Mammary epithelial cell (primary cell): ENCODE measurements at regions of chr19 and their contacts with region 1.

Region 1: DNA sequence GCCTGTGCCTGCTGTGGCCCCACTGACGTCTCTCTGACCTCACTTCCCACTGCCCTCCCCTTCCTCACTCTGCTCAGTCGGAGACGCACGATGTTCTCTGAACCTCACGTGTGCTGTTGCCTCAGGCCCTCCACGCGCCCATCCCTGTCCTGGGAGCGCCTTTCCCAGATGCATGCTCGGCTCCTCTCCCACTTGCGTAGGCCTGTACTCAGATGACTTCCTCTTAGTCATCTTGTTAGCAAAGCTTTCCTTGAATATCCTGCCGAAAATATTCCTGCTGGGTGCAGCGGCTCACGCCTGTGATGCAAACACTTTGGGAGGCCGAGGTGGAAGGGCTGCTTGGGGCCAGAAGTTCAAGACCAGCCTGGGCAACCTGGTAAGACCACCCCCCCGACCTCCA is 9.3 kb upstream of the SYT5 start:
- DNase-seq: peak; percentile 100
- H3K4me3 ChIP-seq: no peak overlapping the region
- H3K27ac ChIP-seq: peak overlapping the region; percentile 87
- H3K4me1 ChIP-seq: peaks cover 9% of the 10 kb centered on the region
- H3K27me3 ChIP-seq: no peaks in the 10 kb centered on the region
- CTCF ChIP-seq: no peak

Region 2: DNA sequence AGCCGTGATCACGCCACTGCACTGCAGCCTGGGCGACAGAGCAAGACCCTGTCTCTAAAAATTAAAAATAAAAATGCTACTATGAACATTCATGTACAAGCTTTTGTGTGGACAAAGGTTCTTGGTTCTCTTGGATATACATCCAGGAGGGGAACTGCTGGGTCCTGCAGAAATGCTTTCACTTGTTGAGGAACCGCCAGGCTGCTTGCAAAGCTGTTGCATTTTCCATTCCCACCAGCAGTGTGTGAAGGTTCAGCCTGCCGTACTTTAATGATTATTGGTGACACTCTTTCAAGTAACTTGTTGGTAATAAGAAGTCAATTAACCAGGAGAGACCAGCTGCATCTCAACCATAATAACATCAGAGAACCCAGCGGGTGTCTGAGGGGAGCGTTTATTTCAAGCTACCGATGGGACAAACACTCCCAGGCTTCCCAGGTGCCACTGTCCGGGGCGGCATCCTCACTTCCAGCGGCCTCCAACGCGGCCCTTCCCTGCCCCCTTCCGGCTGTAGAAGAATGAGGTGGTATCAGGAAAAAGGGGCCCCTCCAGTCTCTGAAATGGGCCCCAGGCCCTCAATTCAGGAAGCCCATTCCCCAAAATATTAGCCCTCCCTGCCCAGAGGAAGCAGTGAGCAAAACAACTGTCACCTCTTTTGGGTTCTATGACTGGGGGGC is 56.8 kb before region 1 on chr19:
- CTCF ChIA-PET with region 1: no interaction called
- dilution Hi-C with region 1: no loop called
- in situ Hi-C with region 1: no loop called
- intact Hi-C with region 1: no loop called
- DNase-seq: no peak
- H3K4me3 ChIP-seq: no peak overlapping the region
- H3K27ac ChIP-seq: no peak overlapping the region
- H3K4me1 ChIP-seq: no peaks in the 10 kb centered on the region
- H3K27me3 ChIP-seq: no peaks in the 10 kb centered on the region
- CTCF ChIP-seq: no peak

Region 3: GRCh38 chr19:55160128-55160985 is 29.1 kb before region 1 on chr19:
- CTCF ChIA-PET with region 1: no interaction called
- dilution Hi-C with region 1: no loop called
- in situ Hi-C with region 1: no loop called
- intact Hi-C with region 1: loop called (anchors 1 kb)
- DNase-seq: peak; percentile 83
- H3K4me3 ChIP-seq: no peak overlapping the region
- H3K27ac ChIP-seq: no peak overlapping the region
- H3K4me1 ChIP-seq: peaks cover 18% of the 10 kb centered on the region
- H3K27me3 ChIP-seq: peaks cover 2% of the 10 kb centered on the region
- CTCF ChIP-seq: peak; percentile 86 to 97

Region 4: DNA sequence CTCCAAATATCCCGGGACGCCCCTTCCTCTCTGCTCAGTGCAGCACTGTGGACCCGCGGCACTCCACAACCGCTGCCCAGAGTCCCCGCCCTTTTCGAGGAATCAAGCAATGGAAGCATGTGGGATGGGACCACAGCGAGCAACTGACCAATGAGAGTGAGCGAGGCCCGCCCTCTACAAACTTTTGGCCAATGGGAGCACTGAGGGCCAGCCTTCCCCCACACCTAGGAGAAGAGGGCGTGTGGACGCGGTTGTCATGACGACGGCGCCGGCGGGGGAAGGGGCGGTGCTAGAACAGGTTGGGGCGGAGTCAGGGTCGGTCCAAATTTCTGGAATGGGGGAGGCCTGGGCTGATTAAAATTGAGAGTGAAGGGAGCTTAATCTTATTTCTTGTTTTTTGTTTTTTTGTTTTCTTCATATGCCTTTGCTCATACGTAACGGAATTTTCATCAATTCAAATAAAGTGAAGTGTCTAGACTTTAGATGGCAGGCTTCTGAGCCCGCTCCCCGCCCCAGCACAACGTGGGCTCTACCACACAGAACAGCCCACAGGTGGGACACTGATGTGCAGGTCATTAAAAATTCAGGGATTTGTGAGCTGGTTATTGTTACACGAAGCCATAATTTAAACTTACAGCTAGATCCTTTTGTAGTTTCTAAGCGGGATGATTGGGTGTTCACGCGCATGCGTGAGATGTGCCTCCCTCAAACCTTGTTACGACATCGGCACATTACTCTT is 22.7 kb before region 1 on chr19 and contains the start of gene DNAAF3:
- CTCF ChIA-PET with region 1: no interaction called
- dilution Hi-C with region 1: no loop called
- in situ Hi-C with region 1: no loop called
- intact Hi-C with region 1: loop called (anchors 2 kb)
- DNase-seq: peak; percentile 97
- H3K4me3 ChIP-seq: peak within 1 kb of the TSS; percentile 49 to 67 (median 61)
- H3K27ac ChIP-seq: peak within 1 kb of the TSS; percentile 69
- H3K4me1 ChIP-seq: peaks cover 9% of the 10 kb centered on the region
- H3K27me3 ChIP-seq: peaks cover 2% of the 10 kb centered on the region
- CTCF ChIP-seq: no peak
- total RNA-seq, gene DNAAF3: 1.5 to 2.2 TPM

Region 5: GRCh38 chr19:55206664-55207500 is 17.5 kb after region 1 on chr19:
- CTCF ChIA-PET with region 1: no interaction called
- dilution Hi-C with region 1: no loop called
- in situ Hi-C with region 1: no loop called
- intact Hi-C with region 1: loop called (anchors 1 kb)
- DNase-seq: peak; percentile 85
- H3K4me3 ChIP-seq: peak overlapping the region in 1 of 3 experiments; percentile 36
- H3K27ac ChIP-seq: peak overlapping the region; percentile 40
- H3K4me1 ChIP-seq: peaks cover 28% of the 10 kb centered on the region
- H3K27me3 ChIP-seq: no peaks in the 10 kb centered on the region
- CTCF ChIP-seq: no peak

Region 6: DNA sequence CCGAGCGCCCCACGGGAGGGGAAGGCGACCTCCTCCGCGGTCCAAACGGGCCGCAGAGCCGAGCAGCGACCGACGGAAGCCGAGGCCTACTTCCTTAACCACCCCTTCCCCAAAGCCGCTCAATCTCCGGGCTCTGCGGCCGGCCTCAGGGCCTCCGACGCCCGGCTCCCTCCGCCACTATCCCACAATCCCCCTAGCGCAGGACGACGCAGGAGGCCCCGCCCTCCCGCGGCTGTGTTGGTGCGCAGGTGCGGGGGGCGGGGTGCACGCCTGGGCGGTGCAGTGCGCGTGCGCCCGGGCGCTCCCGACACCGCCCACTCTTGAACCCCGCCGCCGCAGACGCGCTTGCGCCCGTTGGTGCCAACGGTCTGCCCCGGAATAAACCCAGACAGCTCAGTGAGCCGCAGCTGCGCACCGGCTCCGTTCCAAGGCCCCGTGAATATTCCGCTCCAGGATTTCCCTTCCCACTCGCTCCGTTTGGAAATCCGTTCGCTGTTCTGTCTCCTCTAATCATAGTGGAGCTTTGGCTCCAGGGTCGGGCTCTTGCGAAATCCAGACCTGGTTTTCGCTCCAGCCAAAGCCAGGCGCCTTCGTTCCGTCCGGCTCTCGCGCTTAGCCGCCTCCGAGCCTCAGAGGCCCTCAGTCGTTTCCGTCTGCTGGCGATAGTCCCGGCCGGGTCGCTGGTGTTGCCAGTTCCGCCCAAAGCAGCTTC is 69.6 kb after region 1 on chr19 and contains the start of gene PPP6R1:
- CTCF ChIA-PET with region 1: no interaction called
- dilution Hi-C with region 1: no loop called
- in situ Hi-C with region 1: no loop called
- intact Hi-C with region 1: no loop called
- DNase-seq: peak; percentile 100
- H3K4me3 ChIP-seq: peak within 1 kb of the TSS; percentile 82 to 95 (median 94)
- H3K27ac ChIP-seq: peak within 1 kb of the TSS; percentile 89
- H3K4me1 ChIP-seq: peaks cover 28% of the 10 kb centered on the region
- H3K27me3 ChIP-seq: no peaks in the 10 kb centered on the region
- CTCF ChIP-seq: peak in 1 of 2 donors; percentile 1
- total RNA-seq, gene PPP6R1: 28.3 to 74.2 TPM

Region 7: GRCh38 chr19:56132316-56132822 is 942.9 kb after region 1 on chr19:
- CTCF ChIA-PET with region 1: interaction called, 11 read pairs
- dilution Hi-C with region 1: no loop called
- in situ Hi-C with region 1: no loop called
- intact Hi-C with region 1: no loop called
- DNase-seq: no peak
- H3K4me3 ChIP-seq: no peak overlapping the region
- H3K27ac ChIP-seq: no peak overlapping the region
- H3K4me1 ChIP-seq: no peaks in the 10 kb centered on the region
- H3K27me3 ChIP-seq: no peaks in the 10 kb centered on the region
- CTCF ChIP-seq: no peak